Activated T-helper 1 cell treated with anti-CD3 and anti-CD28 coated beads, Interleukin-12 subunit alpha, Interleukin-12 subunit beta, Interleukin-2, Interleukin-4 antibody, amounts not matched to agents 30 ng/mL and 10 ng/mL and 1 ng/mL, durations not matched to agents 14 hours and 24 hours and 36 hours (primary cell): ENCODE measurements at regions of chr19 and their contacts with region 1.

Region 1: DNA sequence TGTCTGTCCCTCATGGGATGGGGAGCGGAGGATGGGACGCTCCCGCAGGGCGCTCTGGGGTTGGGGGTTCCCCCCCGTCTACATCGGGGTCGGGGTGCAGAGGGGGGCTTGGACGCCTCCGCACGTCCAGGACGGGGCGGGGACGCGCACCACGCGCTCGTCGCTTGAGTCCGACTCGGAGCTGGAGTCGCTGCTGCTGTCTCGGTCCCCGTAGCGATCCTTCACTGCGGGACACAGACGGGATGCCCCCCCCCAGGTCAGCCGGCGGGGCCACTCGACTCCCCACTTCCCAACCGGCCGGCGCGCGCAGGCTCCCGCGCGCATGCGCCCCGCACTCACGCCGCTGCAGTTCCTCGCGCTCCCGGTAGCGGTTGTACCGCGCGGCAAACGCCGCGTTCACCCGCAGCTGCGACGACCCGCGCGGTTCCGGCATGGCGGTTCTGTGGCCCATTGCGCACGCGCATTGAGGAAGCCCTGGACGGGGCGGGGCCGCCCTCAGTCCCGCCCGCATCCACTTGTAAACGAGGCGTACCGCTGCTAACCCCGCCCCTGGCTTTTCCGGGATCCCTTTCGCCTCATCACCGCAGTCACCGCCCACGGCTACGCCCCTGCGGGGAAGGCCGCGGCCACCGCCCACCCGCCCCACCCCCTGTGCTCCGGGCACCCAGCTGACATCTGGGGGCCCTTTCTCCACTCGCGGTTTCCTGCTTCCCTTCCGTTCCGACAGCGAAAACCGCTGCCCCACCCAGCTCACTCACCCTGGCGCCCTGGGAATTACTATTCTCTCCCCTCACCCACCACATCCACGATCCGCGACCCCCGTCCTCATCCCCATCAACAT is at the start of gene KRI1:
- DNase-seq: peak; percentile 100
- H3K4me3 Mint-ChIP-seq: peak within 1 kb of the TSS; percentile 95
- H3K27ac Mint-ChIP-seq: peak within 1 kb of the TSS; percentile 96
- H3K4me1 Mint-ChIP-seq: peaks cover 48% of the 10 kb centered on the region
- H3K27me3 Mint-ChIP-seq: no peaks in the 10 kb centered on the region
- total RNA-seq, gene KRI1: 91.1 and 91.8 TPM in 2 replicates

Region 2: DNA sequence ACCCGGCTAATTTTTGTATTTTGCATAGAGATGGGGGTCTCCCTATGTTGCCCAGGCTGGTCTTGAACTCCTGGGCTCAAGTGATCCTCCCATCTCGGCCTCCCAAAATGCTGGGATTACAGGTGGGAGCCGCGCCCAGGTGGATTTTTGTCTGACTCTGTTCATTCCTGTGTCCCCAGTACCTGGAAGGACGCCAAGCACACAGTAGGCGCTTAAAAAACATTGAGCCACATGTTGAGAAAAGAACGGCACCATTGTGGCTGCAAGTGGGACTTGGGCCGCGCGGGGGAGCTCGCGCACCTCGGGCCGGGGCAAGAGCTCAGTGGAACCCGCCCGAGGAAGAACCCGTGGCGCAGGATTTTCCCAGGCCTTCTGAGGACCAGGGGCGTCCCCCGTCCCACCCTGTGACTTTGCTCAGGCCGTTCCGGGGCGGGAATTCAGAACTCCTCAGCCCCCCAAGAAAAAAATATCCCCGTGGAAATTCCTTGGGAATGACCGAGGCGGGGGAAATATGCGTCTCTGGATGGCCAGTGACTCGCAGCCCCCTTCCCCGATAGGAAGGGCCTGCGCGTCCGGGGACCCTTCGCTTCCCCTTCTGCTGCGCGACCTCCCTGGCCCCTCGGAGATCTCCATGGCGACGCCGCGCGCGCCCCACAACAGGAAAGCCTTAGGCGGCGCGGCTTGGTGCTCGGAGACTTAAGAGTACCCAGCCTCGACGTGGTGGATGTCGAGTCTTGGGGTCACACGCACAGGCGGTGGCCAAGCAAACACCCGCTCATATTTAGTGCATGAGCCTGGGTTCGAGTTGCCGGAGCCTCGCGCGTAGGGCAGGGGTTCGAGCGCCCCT is 296.2 kb before region 1 on chr19:
- intact Hi-C with region 1: loop called (anchors 5 kb)
- DNase-seq: peak; percentile 84
- H3K4me3 Mint-ChIP-seq: peak overlapping the region; percentile 94
- H3K27ac Mint-ChIP-seq: peak overlapping the region; percentile 94
- H3K4me1 Mint-ChIP-seq: peaks cover 28% of the 10 kb centered on the region
- H3K27me3 Mint-ChIP-seq: no peaks in the 10 kb centered on the region

Region 3: DNA sequence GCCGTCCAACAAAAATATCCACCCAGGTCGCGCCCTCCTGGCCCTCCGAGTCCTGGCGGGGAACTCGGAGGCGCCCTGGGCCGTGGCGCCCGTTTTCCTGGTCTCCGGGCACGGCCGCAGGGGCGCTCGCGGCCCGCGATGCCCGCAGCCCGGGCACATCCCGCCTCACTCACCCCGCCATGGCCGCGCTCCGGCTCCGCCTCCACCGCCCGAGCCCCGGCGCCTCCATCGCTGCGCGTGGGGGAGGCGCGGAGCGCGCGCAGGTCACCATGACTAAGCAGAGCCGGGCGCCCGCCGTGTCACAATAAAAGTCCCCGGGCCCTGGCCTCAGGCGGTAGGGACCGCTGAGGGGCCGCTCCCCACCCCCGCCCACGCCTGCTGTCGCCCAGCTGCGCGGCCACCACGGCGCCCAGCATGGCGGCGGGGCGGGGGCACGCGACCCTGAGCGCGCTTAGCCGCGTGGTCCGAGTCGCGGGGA is 63.2 kb before region 1 on chr19:
- intact Hi-C with region 1: loop called (anchors 1 kb)
- DNase-seq: peak; percentile 92
- H3K4me3 Mint-ChIP-seq: peak overlapping the region; percentile 94
- H3K27ac Mint-ChIP-seq: peak overlapping the region; percentile 88
- H3K4me1 Mint-ChIP-seq: peaks cover 31% of the 10 kb centered on the region
- H3K27me3 Mint-ChIP-seq: no peaks in the 10 kb centered on the region

Region 4: DNA sequence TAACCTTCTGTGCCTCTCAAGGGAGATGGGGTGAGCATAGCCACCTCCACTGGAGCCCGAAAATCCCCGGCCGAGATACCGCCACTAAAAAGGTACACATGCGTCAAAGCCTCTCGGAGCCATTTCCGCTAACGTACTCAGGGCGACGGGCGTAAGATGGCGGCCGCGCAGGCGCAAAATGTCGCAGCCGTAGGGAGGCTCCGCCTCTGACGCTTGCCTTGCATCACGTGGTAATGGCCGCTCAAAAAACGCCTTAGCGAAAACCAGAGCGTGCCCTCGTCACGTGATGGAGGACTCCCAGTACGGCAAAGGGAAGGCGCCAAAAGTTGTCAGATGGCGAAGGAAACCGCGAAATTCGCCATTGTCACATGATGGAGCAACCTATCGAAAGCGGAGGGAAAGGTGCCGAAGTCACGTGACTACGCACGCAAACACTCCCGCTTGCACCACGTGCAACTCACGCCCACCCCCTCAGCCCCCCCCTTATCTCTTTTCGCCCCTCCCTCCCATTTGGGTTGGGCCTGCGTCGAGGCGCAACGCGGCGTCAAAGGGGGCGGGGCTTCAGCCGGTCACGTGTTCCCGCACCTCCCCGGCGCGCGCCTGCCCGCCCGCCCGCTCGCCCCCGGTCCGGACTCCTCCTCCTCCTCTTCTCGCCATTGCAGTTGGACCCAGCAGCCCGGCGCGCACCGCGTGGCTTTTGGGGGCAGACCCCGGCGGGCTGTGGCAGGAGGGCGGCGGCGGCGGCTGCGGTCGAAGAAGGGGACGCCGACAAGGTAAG is 88.1 kb after region 1 on chr19 and contains the start of gene ILF3:
- intact Hi-C with region 1: loop called (anchors 1 kb)
- DNase-seq: peak; percentile 100
- H3K4me3 Mint-ChIP-seq: peak within 1 kb of the TSS; percentile 92
- H3K27ac Mint-ChIP-seq: peak within 1 kb of the TSS; percentile 96
- H3K4me1 Mint-ChIP-seq: peaks cover 29% of the 10 kb centered on the region
- H3K27me3 Mint-ChIP-seq: peaks cover 6% of the 10 kb centered on the region
- total RNA-seq, gene ILF3: 536 and 558 TPM in 2 replicates

Region 5: DNA sequence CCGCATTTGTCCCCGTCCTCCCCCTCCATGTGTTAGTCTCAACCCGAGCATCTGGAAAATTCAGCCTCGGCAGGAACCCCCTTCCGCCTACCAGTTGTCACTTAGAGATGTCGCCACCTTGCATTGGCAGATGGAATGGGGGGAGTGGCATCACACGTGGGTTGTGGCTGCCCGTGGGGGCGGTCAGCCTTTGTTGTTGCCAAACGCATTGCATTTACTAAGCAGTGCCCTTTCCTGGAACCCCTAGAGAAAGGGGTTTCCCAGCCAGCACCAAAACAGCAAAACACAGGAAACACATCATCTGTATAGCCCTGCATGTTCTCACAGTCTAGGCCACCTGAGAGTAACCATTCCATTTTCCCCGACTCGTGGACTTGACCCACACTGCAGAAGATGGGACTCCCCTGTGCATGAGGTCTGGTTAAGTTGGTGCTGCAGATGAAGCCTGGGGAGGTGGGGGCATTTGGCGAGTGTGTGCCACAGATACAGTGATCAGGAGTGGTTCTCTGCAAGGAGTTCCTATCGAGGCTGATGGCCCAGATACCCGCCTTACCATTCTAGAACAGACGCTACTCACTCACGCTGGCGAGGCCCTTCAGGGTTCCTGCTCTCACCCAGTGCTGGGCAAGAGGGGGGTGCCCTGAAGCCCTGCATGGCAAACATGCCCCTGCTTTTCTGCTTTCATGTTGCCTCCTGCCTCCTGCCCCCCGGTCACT is 231.9 kb after region 1 on chr19:
- intact Hi-C with region 1: loop called (anchors 1 kb)
- DNase-seq: peak; percentile 92
- H3K4me3 Mint-ChIP-seq: peak overlapping the region; percentile 89
- H3K27ac Mint-ChIP-seq: peak overlapping the region; percentile 99
- H3K4me1 Mint-ChIP-seq: peaks cover 58% of the 10 kb centered on the region
- H3K27me3 Mint-ChIP-seq: no peaks in the 10 kb centered on the region

Region 6: GRCh38 chr19:10812902-10813404 is 247.2 kb after region 1 on chr19:
- intact Hi-C with region 1: no loop called
- DNase-seq: no peak
- H3K4me3 Mint-ChIP-seq: peak overlapping the region; percentile 32
- H3K27ac Mint-ChIP-seq: peak overlapping the region; percentile 84
- H3K4me1 Mint-ChIP-seq: peaks cover 30% of the 10 kb centered on the region
- H3K27me3 Mint-ChIP-seq: no peaks in the 10 kb centered on the region

Region 7: GRCh38 chr19:11096210-11096841 is 530.5 kb after region 1 on chr19:
- intact Hi-C with region 1: loop called (anchors 5 kb)
- DNase-seq: peak; percentile 42
- H3K4me3 Mint-ChIP-seq: peak overlapping the region; percentile 81
- H3K27ac Mint-ChIP-seq: peak overlapping the region; percentile 97
- H3K4me1 Mint-ChIP-seq: peaks cover 61% of the 10 kb centered on the region
- H3K27me3 Mint-ChIP-seq: no peaks in the 10 kb centered on the region